ENCODE measurements at regions of chr10 and their contacts with region 1.

Region 1: DNA sequence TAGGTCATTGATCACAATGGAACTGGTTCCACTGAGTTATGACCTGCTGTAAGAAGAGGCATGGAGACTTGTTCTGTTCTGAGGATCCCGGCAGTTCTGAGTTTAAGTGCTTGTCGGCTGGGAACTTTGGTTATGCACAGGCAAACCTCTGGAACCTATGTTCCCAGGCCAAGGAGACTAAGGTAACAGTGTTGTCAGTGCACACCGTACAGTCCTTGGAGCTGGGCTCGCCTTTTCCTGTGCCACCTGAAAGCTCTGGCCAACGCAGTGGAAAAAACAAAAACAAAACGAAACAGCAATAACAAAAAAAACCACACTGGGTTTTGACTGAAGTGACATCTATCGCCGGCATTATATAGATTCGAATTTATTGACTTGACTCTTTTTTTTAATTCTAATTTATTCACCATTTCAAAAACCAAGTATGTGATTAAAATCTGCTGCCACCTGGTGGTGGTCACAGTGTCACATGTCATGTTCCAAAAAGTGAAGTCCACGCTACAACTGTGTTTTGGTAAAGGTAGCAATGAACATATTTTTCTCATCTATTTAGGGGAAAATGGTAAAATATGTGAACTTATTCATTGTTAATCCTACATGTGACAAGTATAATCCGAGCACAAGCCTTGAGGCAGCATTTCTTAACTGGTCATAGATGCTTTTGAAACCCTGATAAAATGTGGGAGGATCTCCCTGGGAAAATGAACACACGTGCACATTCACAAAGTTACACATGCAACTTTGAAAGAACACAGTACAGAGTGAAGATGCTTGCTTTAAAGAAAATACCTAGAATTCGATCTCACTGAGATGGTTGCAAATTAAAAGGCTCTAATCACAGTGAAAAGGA is 113.8 kb upstream of the PPP2R2D start:
- DNase-seq: peak; percentile 70
- H3K4me3 Mint-ChIP-seq: no peak overlapping the region
- H3K27ac Mint-ChIP-seq: no peak overlapping the region
- H3K4me1 Mint-ChIP-seq: no peaks in the 10 kb centered on the region
- H3K27me3 Mint-ChIP-seq: peaks cover 2% of the 10 kb centered on the region

Region 2: GRCh38 chr10:131453594-131454355 is 333.2 kb before region 1 on chr10:
- intact Hi-C with region 1: loop called (anchors 5 kb)
- DNase-seq: peak; percentile 91
- H3K4me3 Mint-ChIP-seq: peak overlapping the region; percentile 17
- H3K27ac Mint-ChIP-seq: no peak overlapping the region
- H3K4me1 Mint-ChIP-seq: no peaks in the 10 kb centered on the region
- H3K27me3 Mint-ChIP-seq: peaks cover 12% of the 10 kb centered on the region